Activated CD4-positive, alpha-beta memory T cell treated with anti-CD3 and anti-CD28 coated beads for 36 hours (primary cell): ENCODE measurements at regions of chr17 and their contacts with region 1.

Region 1: GRCh38 chr17:82320956-82321927 is 3.8 kb upstream of the CD7 start:
- DNase-seq: peak; percentile 88
- H3K4me3 Mint-ChIP-seq: peak overlapping the region; percentile 80
- H3K27ac Mint-ChIP-seq: no peak overlapping the region
- H3K4me1 Mint-ChIP-seq: peaks cover 32% of the 10 kb centered on the region
- H3K27me3 Mint-ChIP-seq: no peaks in the 10 kb centered on the region

Region 2: GRCh38 chr17:82303944-82304808 is 17.1 kb before region 1 on chr17:
- CTCF ChIA-PET with region 1: interaction called, 113 read pairs
- POLR2A ChIA-PET with region 1: interaction called, 103 read pairs
- intact Hi-C with region 1: loop called (anchors 1 kb)
- DNase-seq: peak; percentile 11
- H3K4me3 Mint-ChIP-seq: peak overlapping the region; percentile 93
- H3K27ac Mint-ChIP-seq: peak overlapping the region; percentile 100
- H3K4me1 Mint-ChIP-seq: peaks cover 77% of the 10 kb centered on the region
- H3K27me3 Mint-ChIP-seq: no peaks in the 10 kb centered on the region

Region 3: GRCh38 chr17:82332669-82333278 is 11.5 kb after region 1 on chr17:
- CTCF ChIA-PET with region 1: interaction called, 12 read pairs
- POLR2A ChIA-PET with region 1: interaction called, 5 read pairs
- intact Hi-C with region 1: no loop called
- DNase-seq: peak; percentile 60
- H3K4me3 Mint-ChIP-seq: peak overlapping the region; percentile 77
- H3K27ac Mint-ChIP-seq: no peak overlapping the region
- H3K4me1 Mint-ChIP-seq: peaks cover 29% of the 10 kb centered on the region
- H3K27me3 Mint-ChIP-seq: no peaks in the 10 kb centered on the region